ENCODE measurements at regions of chr11 and their contacts with region 1.

Region 1: GRCh38 chr11:2420502-2421225 is 20.1 kb downstream of the TSSC4 start:
- DNase-seq: peak; percentile 99
- H3K4me3 ChIP-seq: no peak overlapping the region; a peak in 1 of 4 replicates
- H3K27ac ChIP-seq: no peak overlapping the region
- H3K4me1 ChIP-seq: no peaks in the 10 kb centered on the region; a peak in 1 of 4 replicates
- H3K27me3 ChIP-seq: no peaks in the 10 kb centered on the region
- CTCF ChIP-seq: peak; percentile 85
- EP300 ChIP-seq: no peak
- RAD21 ChIP-seq: peak; percentile 91

Region 2: DNA sequence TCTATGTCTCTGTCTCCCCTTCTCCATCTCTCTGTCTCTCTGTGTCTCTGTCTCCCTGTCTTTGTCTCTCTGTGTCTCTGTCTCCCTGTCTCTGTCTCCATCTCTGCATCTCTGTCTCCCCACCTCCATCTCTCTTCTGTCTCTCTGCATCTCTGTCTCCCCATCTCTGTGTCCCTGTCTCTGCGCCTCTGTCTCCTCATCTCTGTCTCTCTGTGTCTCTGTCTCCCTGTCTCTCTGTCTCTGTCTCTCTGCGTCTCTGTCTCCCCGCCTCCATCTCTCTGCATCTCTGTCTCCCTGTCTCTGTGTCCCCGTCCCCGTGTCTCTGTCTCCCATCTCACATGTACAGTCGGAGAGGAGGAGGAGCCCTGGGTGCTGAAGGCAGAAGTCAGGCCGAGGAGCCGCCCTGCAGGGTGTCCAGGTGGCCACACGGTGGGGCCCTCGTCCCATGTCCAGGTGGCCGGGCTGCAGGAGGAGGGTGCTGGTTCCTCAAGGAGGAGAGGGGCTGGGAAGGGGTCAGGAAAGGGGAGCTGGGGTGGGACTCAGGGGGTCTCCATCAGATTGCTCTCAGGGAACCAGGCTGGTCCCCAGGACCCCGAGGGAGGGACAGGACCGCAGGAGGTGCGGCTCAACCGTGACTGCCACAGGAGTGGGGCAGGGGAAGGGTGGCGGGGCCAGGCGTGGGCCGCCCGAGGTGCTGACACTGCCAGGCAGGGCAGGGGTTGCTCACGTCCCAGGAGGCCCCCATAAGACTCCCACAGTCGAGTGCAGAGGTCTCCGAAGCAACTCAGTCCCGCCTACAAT is 223.5 kb before region 1 on chr11:
- CTCF ChIA-PET with region 1: interaction called, 143 read pairs
- POLR2A ChIA-PET with region 1: interaction called, 3 read pairs
- DNase-seq: peak; percentile 91
- H3K4me3 ChIP-seq: no peak overlapping the region
- H3K27ac ChIP-seq: no peak overlapping the region
- H3K4me1 ChIP-seq: peaks cover 0 to 28% of the 10 kb centered on the region in 2 experiments; a peak in 1 of 4 replicates
- H3K27me3 ChIP-seq: no peaks in the 10 kb centered on the region
- CTCF ChIP-seq: peak; percentile 60
- EP300 ChIP-seq: no peak
- RAD21 ChIP-seq: peak; percentile 91

Region 3: DNA sequence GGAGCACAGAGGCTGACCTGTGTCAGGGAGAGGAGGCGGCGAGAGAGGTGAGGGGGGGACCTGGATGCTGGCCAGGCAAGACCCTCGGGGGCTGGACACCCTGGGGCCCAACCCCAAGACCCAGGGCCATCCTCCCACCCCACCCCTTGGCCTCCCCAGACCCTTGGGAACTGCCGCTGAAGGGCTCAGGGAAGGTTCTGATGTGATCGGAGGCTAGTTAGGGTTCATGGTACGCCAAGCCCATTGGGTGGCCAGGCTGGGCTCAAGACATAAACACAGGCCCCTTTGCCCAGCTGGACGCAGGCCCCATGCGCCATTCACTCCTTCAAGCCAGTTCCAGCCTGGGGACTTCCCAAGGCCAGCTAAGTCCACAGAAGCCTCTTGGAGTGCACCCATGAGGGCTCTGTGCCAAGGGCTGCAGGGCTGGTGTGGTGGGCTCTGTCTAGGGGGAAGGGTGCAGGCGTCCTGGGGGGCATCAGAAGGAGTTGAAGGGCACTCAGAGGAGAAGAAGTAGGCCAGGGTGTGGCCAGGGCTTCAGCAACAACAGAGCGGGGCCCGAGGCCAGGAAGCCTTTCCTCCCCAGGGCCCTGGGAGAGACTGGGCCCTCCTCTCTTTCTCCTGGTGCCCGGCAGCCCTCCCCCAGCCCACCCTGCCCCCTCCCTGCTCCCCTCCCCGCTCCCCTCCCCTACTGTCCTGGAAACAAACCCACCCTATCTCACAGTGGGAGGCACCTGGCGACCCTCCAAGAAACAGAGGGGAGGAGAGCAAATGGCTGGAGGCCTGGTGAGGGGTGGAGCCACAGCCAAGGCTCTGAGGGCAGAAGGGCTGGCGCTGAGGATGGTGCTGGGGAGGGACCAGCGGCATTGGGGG is 105.9 kb before region 1 on chr11:
- CTCF ChIA-PET with region 1: interaction called, 101 read pairs
- POLR2A ChIA-PET with region 1: no interaction called
- DNase-seq: peak; percentile 95
- H3K4me3 ChIP-seq: no peak overlapping the region
- H3K27ac ChIP-seq: peak overlapping the region; percentile 27 to 74; a peak in 3 of 4 replicates
- H3K4me1 ChIP-seq: peaks cover 26% of the 10 kb centered on the region in 2 experiments; a peak in 3 of 4 replicates
- H3K27me3 ChIP-seq: no peaks in the 10 kb centered on the region
- CTCF ChIP-seq: no peak
- EP300 ChIP-seq: no peak; a peak in 1 of 4 replicates
- RAD21 ChIP-seq: no peak

Region 4: GRCh38 chr11:2400069-2400760 is 20.4 kb before region 1 on chr11 and contains the start of gene TSSC4:
- CTCF ChIA-PET with region 1: interaction called, 166 read pairs
- POLR2A ChIA-PET with region 1: interaction called, 6 read pairs
- DNase-seq: peak; percentile 99
- H3K4me3 ChIP-seq: peak within 1 kb of the TSS; percentile 99 to 100
- H3K27ac ChIP-seq: peak within 1 kb of the TSS; percentile 93 to 95
- H3K4me1 ChIP-seq: peaks cover 10 to 23% of the 10 kb centered on the region in 2 experiments; a peak in 2 of 4 replicates
- H3K27me3 ChIP-seq: no peaks in the 10 kb centered on the region
- CTCF ChIP-seq: peak; percentile 96
- EP300 ChIP-seq: peak in 1 of 2 experiments; percentile 25; a peak in 1 of 4 replicates
- RAD21 ChIP-seq: peak; percentile 83
- polyA plus RNA-seq, gene TSSC4: 45.1 and 45.3 TPM in 2 replicates

Region 5: DNA sequence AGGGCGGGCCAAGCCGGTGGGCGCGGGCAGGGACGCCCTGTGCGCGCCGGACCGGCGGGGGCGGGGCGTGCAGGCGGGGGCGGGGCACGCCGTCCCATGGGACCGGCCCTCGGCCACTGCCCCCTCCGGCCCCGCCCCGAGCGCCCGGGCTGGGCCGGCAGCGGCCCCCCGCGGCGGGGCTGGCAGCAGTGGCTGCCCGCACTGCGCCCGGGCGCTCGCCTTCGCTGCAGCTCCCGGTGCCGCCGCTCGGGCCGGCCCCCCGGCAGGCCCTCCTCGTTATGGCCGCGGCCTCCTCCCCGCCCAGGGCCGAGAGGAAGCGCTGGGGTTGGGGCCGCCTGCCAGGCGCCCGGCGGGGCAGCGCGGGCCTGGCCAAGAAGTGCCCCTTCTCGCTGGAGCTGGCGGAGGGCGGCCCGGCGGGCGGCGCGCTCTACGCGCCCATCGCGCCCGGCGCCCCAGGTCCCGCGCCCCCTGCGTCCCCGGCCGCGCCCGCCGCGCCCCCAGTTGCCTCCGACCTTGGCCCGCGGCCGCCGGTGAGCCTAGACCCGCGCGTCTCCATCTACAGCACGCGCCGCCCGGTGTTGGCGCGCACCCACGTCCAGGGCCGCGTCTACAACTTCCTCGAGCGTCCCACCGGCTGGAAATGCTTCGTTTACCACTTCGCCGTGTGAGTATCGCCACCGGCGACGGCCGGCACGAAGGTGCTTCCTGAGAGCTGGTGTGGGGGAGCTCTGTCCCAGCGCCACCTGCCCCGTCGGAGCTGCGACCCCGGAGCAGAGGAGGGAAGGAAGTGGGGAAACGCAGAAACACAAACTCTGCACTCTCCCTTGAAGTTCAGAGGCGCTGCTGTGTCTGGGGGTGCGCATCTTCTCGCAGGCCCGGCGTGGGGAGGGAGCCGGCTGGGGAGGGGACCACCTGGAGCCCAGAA is 24.4 kb after region 1 on chr11 and contains the start of gene KCNQ1:
- CTCF ChIA-PET with region 1: interaction called, 31 read pairs
- POLR2A ChIA-PET with region 1: no interaction called
- DNase-seq: peak; percentile 98
- H3K4me3 ChIP-seq: peak within 1 kb of the TSS in 1 of 2 experiments; percentile 40; a peak in 2 of 4 replicates
- H3K27ac ChIP-seq: no peak within 1 kb of the TSS
- H3K4me1 ChIP-seq: peaks cover 0 to 6% of the 10 kb centered on the region in 2 experiments; a peak in 1 of 4 replicates
- H3K27me3 ChIP-seq: no peaks in the 10 kb centered on the region; the same call in 1 of the 2 replicates
- CTCF ChIP-seq: no peak
- EP300 ChIP-seq: no peak
- RAD21 ChIP-seq: no peak
- polyA plus RNA-seq, gene KCNQ1: 0.05 and 0.15 TPM in 2 replicates

Region 6: GRCh38 chr11:2599561-2600182 is 179.0 kb after region 1 on chr11:
- CTCF ChIA-PET with region 1: no interaction called
- POLR2A ChIA-PET with region 1: no interaction called
- DNase-seq: no peak
- H3K4me3 ChIP-seq: no peak overlapping the region
- H3K27ac ChIP-seq: no peak overlapping the region
- H3K4me1 ChIP-seq: no peaks in the 10 kb centered on the region
- H3K27me3 ChIP-seq: no peaks in the 10 kb centered on the region
- CTCF ChIP-seq: no peak
- EP300 ChIP-seq: no peak
- RAD21 ChIP-seq: no peak

Region 7: DNA sequence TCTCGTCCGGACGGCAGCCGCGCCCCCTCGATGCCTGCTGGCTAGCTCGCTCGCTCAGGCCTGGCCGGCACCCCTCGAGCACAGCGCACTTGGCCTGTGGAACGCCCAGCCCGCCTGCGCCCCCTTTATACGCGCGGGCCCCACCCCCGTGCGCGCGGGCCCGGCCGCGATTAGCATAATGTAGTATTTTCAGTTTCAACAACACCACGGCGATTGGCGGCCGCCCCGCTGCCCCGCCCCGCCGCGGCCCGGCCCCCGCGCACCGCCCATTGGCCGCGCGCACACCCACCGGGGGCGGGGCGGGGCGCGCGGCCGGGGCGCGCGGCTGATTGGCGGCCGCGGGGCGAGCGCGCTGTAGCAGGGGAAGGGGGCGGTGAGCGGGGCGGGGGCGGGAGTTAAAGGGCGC is 465.0 kb after region 1 on chr11 and contains the start of gene CDKN1C:
- CTCF ChIA-PET with region 1: interaction called, 162 read pairs
- POLR2A ChIA-PET with region 1: no interaction called
- DNase-seq: peak; percentile 98
- H3K4me3 ChIP-seq: peak within 1 kb of the TSS; percentile 58 to 65
- H3K27ac ChIP-seq: peak within 1 kb of the TSS in 1 of 2 experiments; percentile 83; a peak in 1 of 4 replicates
- H3K4me1 ChIP-seq: peaks cover 3 to 36% of the 10 kb centered on the region in 2 experiments; a peak in 1 of 4 replicates
- H3K27me3 ChIP-seq: no peaks in the 10 kb centered on the region
- CTCF ChIP-seq: no peak
- EP300 ChIP-seq: no peak
- RAD21 ChIP-seq: no peak
- polyA plus RNA-seq, gene CDKN1C: 1.1 and 1.6 TPM in 2 replicates

Measured in SK-N-SH (cell line).